ENCODE measurements at regions of chr4 and their contacts with region 1.

Region 1: DNA sequence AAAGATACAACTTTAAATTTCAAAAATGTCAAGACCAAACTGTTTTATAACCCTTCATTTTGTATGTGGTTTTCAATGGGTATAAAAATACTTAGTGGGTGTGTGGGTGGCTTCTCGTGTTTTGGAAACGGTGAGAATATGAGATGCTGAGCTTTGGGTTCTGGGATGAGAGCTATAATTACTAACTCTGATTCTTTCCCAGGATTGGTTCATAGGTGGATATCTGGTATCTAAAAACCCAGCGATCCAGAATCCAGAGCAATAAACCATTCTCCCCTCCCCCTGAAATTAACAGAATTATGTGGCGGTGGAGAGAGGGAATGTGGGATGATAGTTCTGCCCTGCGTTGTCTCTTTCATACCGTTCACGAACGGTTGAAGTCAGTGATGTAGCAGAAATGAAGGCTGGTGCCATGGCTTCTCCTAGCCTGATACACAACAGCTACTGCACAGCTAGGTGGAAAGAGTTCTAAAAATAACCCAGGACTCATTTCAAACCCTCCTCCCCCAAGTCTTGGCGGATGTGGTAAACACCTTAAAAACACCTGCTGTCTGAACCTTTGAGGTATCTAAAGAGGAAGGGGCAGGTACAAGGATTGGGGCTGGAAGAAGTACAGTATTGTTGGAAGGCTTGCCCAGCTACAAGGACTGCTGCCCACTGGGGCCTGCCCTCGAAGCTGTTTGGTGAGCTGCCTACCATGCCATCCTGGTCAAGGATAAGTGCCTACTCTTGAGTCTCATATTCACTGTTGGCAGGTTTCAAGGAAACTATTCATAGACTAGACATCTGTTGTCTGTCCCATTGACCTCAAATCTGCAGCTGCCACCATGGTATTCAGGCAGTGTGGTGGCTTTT is 44.5 kb downstream of the SEPTIN11 start:
- DNase-seq: peak; percentile 10 to 81 (median 54)
- ATAC-seq: peak; percentile 65
- H3K4me3 ChIP-seq: peak overlapping the region in 1 of 2 experiments; percentile 55
- H3K4me3 Mint-ChIP-seq: peak overlapping the region; percentile 75
- H3K27ac ChIP-seq: peak overlapping the region; percentile 2 to 39
- H3K27ac Mint-ChIP-seq: peak overlapping the region; percentile 89
- H3K4me1 ChIP-seq: peaks cover 57% of the 10 kb centered on the region
- H3K4me1 Mint-ChIP-seq: peaks cover 61% of the 10 kb centered on the region
- H3K27me3 ChIP-seq: no peaks in the 10 kb centered on the region
- H3K27me3 Mint-ChIP-seq: no peaks in the 10 kb centered on the region
- CTCF ChIP-seq: no peak

Region 2: GRCh38 chr4:76896731-76897535 is 97.1 kb before region 1 on chr4:
- CTCF ChIA-PET with region 1: no interaction called
- POLR2A ChIA-PET with region 1: no interaction called
- intact Hi-C with region 1: loop called in 1 of 2 experiments (anchors 5 kb)
- DNase-seq: peak in 6 of 9 experiments; percentile 30 to 59 (median 45)
- ATAC-seq: peak; percentile 67
- H3K4me3 ChIP-seq: peak overlapping the region; percentile 16 to 53
- H3K4me3 Mint-ChIP-seq: no peak overlapping the region
- H3K27ac ChIP-seq: no peak overlapping the region
- H3K27ac Mint-ChIP-seq: no peak overlapping the region
- H3K4me1 ChIP-seq: peaks cover 2% of the 10 kb centered on the region
- H3K4me1 Mint-ChIP-seq: peaks cover 11% of the 10 kb centered on the region
- H3K27me3 ChIP-seq: peaks cover 13 to 14% of the 10 kb centered on the region in 2 experiments
- H3K27me3 Mint-ChIP-seq: peaks cover 32% of the 10 kb centered on the region
- CTCF ChIP-seq: no peak

Region 3: DNA sequence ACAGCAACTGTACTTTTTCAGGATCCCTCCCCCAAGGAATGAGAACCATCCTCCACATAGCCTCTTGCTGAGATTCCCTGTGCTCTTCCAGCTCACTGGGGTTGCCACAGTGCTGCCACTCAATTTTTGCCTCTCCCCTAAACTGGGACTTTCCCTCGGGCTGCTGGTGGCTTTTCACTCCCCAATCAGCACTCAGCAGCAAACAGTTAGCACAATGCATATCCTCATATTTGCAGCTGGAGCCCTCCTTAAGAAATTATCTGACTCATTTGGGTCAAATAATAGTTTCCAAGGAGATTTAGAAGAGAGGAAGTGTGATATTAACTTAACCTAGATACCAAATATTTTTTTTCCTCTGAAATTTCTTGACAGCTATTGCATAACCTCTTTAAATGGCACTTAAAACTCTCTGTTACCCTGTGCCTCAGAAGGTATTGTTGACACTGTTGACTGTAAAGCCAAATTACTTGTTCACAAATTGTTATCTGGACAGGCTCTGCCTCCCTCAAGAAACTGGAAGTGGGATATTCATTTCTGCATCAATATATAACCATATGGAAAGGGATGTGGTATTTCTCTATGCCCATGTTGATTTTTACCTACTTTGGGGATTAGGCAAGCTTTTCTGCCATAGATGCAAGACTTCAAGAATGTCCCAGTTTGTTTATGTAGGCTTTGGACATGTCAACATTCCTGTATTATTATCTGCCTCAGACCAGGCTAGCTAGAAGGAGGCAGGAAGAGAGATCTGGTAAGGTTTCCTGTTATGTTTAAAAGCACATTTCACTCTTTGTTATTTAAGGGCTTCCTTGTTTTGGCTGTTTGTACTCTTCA is 13.6 kb after region 1 on chr4:
- CTCF ChIA-PET with region 1: interaction called, 5 read pairs
- POLR2A ChIA-PET with region 1: interaction called, 12 read pairs
- intact Hi-C with region 1: loop called (anchors 2 kb)
- DNase-seq: peak in 4 of 9 experiments; percentile 19 to 69 (median 36)
- ATAC-seq: peak; percentile 81
- H3K4me3 ChIP-seq: peak overlapping the region in 1 of 2 experiments; percentile 10
- H3K4me3 Mint-ChIP-seq: peak overlapping the region; percentile 59
- H3K27ac ChIP-seq: peak overlapping the region in 1 of 2 experiments; percentile 47
- H3K27ac Mint-ChIP-seq: peak overlapping the region; percentile 86
- H3K4me1 ChIP-seq: peaks cover 43% of the 10 kb centered on the region
- H3K4me1 Mint-ChIP-seq: peaks cover 59% of the 10 kb centered on the region
- H3K27me3 ChIP-seq: no peaks in the 10 kb centered on the region
- H3K27me3 Mint-ChIP-seq: no peaks in the 10 kb centered on the region
- CTCF ChIP-seq: no peak